Activated B cell treated with CpG ODN at 0.5 μM for 24 hours (primary cell): ENCODE measurements at regions of chr17 and their contacts with region 1.

Region 1: GRCh38 chr17:42388381-42389134 is at the start of gene STAT3:
- DNase-seq: peak; percentile 100
- ATAC-seq: peak; percentile 86
- H3K4me3 Mint-ChIP-seq: peak within 1 kb of the TSS; percentile 97
- H3K27ac Mint-ChIP-seq: peak within 1 kb of the TSS; percentile 100
- H3K4me1 Mint-ChIP-seq: peaks cover 56% of the 10 kb centered on the region
- H3K27me3 Mint-ChIP-seq: no peaks in the 10 kb centered on the region
- CTCF ChIP-seq: no peak
- total RNA-seq, gene STAT3: 211 and 233 TPM in 2 replicates

Region 2: GRCh38 chr17:41918314-41919164 is 470.0 kb before region 1 on chr17 and contains the start of gene ACLY:
- CTCF ChIA-PET with region 1: no interaction called
- POLR2A ChIA-PET with region 1: interaction called, 6 read pairs
- intact Hi-C with region 1: loop called (anchors 1 kb)
- DNase-seq: peak; percentile 96
- ATAC-seq: peak; percentile 99
- H3K4me3 Mint-ChIP-seq: peak within 1 kb of the TSS; percentile 92
- H3K27ac Mint-ChIP-seq: peak within 1 kb of the TSS; percentile 84
- H3K4me1 Mint-ChIP-seq: peaks cover 31% of the 10 kb centered on the region
- H3K27me3 Mint-ChIP-seq: no peaks in the 10 kb centered on the region
- CTCF ChIP-seq: no peak
- total RNA-seq, gene ACLY: 133 and 143 TPM in 2 replicates

Region 3: GRCh38 chr17:42248351-42249179 is 140.0 kb before region 1 on chr17:
- CTCF ChIA-PET with region 1: no interaction called
- POLR2A ChIA-PET with region 1: interaction called, 11 read pairs
- intact Hi-C with region 1: no loop called
- DNase-seq: peak; percentile 42
- ATAC-seq: peak; percentile 99
- H3K4me3 Mint-ChIP-seq: peak overlapping the region; percentile 86
- H3K27ac Mint-ChIP-seq: peak overlapping the region; percentile 96
- H3K4me1 Mint-ChIP-seq: peaks cover 52% of the 10 kb centered on the region
- H3K27me3 Mint-ChIP-seq: no peaks in the 10 kb centered on the region
- CTCF ChIP-seq: no peak

Region 4: DNA sequence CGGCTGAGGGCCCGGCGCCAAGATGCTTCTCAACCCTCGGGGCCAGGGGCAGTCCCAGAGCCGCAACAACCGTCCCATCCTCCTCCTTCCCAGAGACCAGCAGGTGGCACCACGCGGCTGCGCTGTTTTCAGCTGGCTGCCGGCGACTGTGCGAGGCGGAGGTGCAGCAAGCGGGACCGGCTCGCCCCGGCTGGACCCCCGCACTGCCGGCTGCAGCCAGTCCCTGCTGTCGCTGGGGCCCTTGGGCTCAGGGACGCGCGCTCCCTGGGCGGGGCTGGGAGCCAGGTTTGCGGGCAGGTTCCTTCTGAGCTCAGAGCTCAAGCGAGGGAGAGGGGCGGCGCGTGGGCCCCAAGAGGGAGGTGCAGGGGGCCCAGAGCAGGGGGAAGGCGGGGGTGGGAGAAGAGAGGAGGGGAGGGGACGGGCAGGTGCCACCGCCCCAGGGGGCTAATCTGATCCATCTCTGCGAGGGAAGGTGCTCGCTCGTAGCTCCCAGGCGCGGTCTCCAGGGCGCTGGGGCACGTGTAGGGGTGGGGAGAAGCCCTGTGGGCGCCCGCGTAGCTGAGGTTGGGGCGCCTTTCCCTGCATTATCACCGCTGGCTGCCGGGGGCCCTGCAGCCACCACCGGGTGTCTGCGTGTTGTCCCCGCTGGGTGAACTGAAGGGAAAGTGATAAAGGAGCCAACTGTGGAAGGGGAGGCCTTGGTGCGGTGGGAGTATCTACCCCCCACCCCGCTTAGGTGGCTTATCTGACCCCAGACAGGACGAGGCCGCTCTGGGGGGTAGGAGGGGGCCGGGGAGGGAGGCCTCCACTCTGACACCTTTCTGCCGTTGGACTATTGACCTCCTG is 76.0 kb before region 1 on chr17:
- CTCF ChIA-PET with region 1: interaction called, 8 read pairs
- POLR2A ChIA-PET with region 1: interaction called, 15 read pairs
- intact Hi-C with region 1: no loop called
- DNase-seq: peak; percentile 70
- ATAC-seq: peak; percentile 77
- H3K4me3 Mint-ChIP-seq: peak overlapping the region; percentile 53
- H3K27ac Mint-ChIP-seq: peak overlapping the region; percentile 30
- H3K4me1 Mint-ChIP-seq: peaks cover 55% of the 10 kb centered on the region
- H3K27me3 Mint-ChIP-seq: no peaks in the 10 kb centered on the region
- CTCF ChIP-seq: no peak

Region 5: GRCh38 chr17:42337442-42337841 is 51.1 kb before region 1 on chr17:
- CTCF ChIA-PET with region 1: interaction called, 4 read pairs
- POLR2A ChIA-PET with region 1: interaction called, 14 read pairs
- intact Hi-C with region 1: loop called (anchors 2 kb)
- DNase-seq: no peak
- ATAC-seq: peak; percentile 66
- H3K4me3 Mint-ChIP-seq: no peak overlapping the region
- H3K27ac Mint-ChIP-seq: peak overlapping the region; percentile 73
- H3K4me1 Mint-ChIP-seq: peaks cover 26% of the 10 kb centered on the region
- H3K27me3 Mint-ChIP-seq: no peaks in the 10 kb centered on the region
- CTCF ChIP-seq: no peak

Region 6: GRCh38 chr17:42405963-42406495 is 17.5 kb after region 1 on chr17:
- CTCF ChIA-PET with region 1: interaction called, 15 read pairs
- POLR2A ChIA-PET with region 1: interaction called, 17 read pairs
- intact Hi-C with region 1: loop called (anchors 1 kb)
- DNase-seq: peak; percentile 77
- ATAC-seq: peak; percentile 83
- H3K4me3 Mint-ChIP-seq: no peak overlapping the region
- H3K27ac Mint-ChIP-seq: no peak overlapping the region
- H3K4me1 Mint-ChIP-seq: peaks cover 8% of the 10 kb centered on the region
- H3K27me3 Mint-ChIP-seq: peaks cover 3% of the 10 kb centered on the region
- CTCF ChIP-seq: no peak

Region 7: GRCh38 chr17:42438600-42439567 is 50.3 kb after region 1 on chr17:
- CTCF ChIA-PET with region 1: no interaction called
- POLR2A ChIA-PET with region 1: no interaction called
- intact Hi-C with region 1: no loop called
- DNase-seq: no peak
- ATAC-seq: peak; percentile 67
- H3K4me3 Mint-ChIP-seq: no peak overlapping the region
- H3K27ac Mint-ChIP-seq: no peak overlapping the region
- H3K4me1 Mint-ChIP-seq: peaks cover 17% of the 10 kb centered on the region
- H3K27me3 Mint-ChIP-seq: no peaks in the 10 kb centered on the region
- CTCF ChIP-seq: no peak

Region 8: DNA sequence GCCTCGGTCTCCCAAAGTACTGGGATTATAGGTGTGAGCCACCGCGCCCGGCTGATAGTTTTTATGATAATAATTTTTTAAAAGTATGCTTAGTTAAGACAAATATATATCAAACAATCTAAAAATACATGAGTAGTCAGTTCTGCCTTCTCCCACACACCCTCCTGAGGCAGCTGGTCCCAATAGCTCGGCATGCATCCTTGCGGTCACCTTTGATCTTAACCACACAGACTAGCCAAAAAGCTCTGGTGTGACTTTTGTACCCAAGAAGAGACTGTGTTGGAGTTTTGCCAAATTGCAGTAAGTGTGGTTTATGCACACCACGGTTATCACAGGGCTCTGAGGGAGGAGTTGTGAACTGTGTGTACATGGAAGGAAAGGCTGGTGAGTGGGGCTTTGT is 95.7 kb after region 1 on chr17:
- CTCF ChIA-PET with region 1: no interaction called
- POLR2A ChIA-PET with region 1: no interaction called
- intact Hi-C with region 1: no loop called
- DNase-seq: no peak
- ATAC-seq: no peak
- H3K4me3 Mint-ChIP-seq: no peak overlapping the region
- H3K27ac Mint-ChIP-seq: no peak overlapping the region
- H3K4me1 Mint-ChIP-seq: peaks cover 6% of the 10 kb centered on the region
- H3K27me3 Mint-ChIP-seq: no peaks in the 10 kb centered on the region
- CTCF ChIP-seq: no peak

Region 9: GRCh38 chr17:42536048-42536371 is 147.5 kb after region 1 on chr17 and contains the start of gene NAGLU:
- CTCF ChIA-PET with region 1: no interaction called
- POLR2A ChIA-PET with region 1: interaction called, 11 read pairs
- intact Hi-C with region 1: no loop called
- DNase-seq: peak; percentile 95
- ATAC-seq: peak; percentile 94
- H3K4me3 Mint-ChIP-seq: peak within 1 kb of the TSS; percentile 89
- H3K27ac Mint-ChIP-seq: peak within 1 kb of the TSS; percentile 83
- H3K4me1 Mint-ChIP-seq: peaks cover 34% of the 10 kb centered on the region
- H3K27me3 Mint-ChIP-seq: no peaks in the 10 kb centered on the region
- CTCF ChIP-seq: no peak
- total RNA-seq, gene NAGLU: 27.8 and 33.9 TPM in 2 replicates